Upper lobe of right lung (tissue), 1 donor: ENCODE measurements at regions of chr13 and their contacts with region 1.

Region 1: DNA sequence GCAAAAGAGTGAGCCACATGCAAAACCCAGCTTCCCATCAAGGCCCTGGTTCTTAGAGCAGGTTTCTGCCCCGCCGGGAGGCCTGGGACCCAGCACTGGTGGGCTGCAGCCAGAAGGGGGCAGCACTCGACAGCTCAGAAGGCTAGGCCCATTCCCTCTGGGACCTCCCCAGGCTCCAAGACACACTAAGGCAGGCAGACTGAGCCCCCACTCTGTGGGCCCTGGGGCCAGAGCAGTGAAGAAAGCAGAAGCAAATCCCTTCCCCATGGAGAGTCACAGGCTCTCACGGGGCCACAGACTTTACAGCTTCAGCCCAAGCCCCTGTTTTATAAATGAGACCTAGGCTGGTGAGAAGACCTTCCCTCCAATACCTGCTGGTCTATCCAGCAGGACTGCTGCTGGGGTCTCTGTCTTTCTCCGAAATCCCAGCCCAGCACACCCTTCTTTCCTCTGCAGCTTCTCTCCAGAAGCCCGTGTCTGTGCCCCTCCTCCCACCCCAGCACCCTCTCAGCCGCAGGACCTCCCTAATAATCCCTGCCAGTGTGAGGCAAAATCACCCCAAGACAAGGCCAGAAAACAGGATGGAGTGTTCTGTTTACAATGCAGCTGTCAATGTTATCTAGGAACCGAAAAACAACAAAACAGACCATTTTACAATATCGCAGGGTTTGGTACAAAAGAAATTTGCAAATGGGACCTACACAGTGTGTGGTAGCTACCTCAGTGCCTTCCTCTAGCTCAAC is 109.3 kb downstream of the ABCC4 start:
- DNase-seq: peak; percentile 88
- ATAC-seq: peak; percentile 94
- H3K4me3 ChIP-seq: no peak overlapping the region
- H3K27ac ChIP-seq: no peak overlapping the region
- H3K4me1 ChIP-seq: peaks cover 6% of the 10 kb centered on the region
- H3K27me3 ChIP-seq: no peaks in the 10 kb centered on the region
- CTCF ChIP-seq: peak; percentile 89

Region 2: GRCh38 chr13:95403828-95404522 is 212.0 kb after region 1 on chr13:
- intact Hi-C with region 1: loop called (anchors 2 kb)
- DNase-seq: peak; percentile 88
- ATAC-seq: peak; percentile 96
- H3K4me3 ChIP-seq: peak overlapping the region; percentile 43
- H3K27ac ChIP-seq: no peak overlapping the region
- H3K4me1 ChIP-seq: peaks cover 5% of the 10 kb centered on the region
- H3K27me3 ChIP-seq: no peaks in the 10 kb centered on the region
- CTCF ChIP-seq: peak; percentile 94

Region 3: GRCh38 chr13:95494082-95494681 is 302.2 kb after region 1 on chr13:
- intact Hi-C with region 1: no loop called
- DNase-seq: no peak
- ATAC-seq: peak; percentile 69
- H3K4me3 ChIP-seq: no peak overlapping the region
- H3K27ac ChIP-seq: no peak overlapping the region
- H3K4me1 ChIP-seq: no peaks in the 10 kb centered on the region
- H3K27me3 ChIP-seq: no peaks in the 10 kb centered on the region
- CTCF ChIP-seq: peak; percentile 76